B cell (primary cell): ENCODE measurements at regions of chr14 and their contacts with region 1.

Region 1: GRCh38 chr14:21229821-21230220 is 39.4 kb downstream of the HNRNPC start:
- DNase-seq: no peak
- ATAC-seq: no peak
- H3K4me3 ChIP-seq: no peak overlapping the region
- H3K4me3 Mint-ChIP-seq: no peak overlapping the region
- H3K27ac ChIP-seq: no peak overlapping the region
- H3K27ac Mint-ChIP-seq: no peak overlapping the region
- H3K4me1 ChIP-seq: peaks cover 0 to 3% of the 10 kb centered on the region in 2 donors
- H3K4me1 Mint-ChIP-seq: peaks cover 25% of the 10 kb centered on the region
- H3K27me3 ChIP-seq: no peaks in the 10 kb centered on the region
- H3K27me3 Mint-ChIP-seq: no peaks in the 10 kb centered on the region
- CTCF ChIP-seq: no peak

Region 2: GRCh38 chr14:21263656-21264411 is 34.0 kb after region 1 on chr14:
- CTCF ChIA-PET with region 1: interaction called, 3 read pairs
- POLR2A ChIA-PET with region 1: no interaction called
- intact Hi-C with region 1: loop called (anchors 5 kb)
- DNase-seq: peak; percentile 21
- ATAC-seq: peak; percentile 47
- H3K4me3 ChIP-seq: no peak overlapping the region
- H3K4me3 Mint-ChIP-seq: peak overlapping the region; percentile 48
- H3K27ac ChIP-seq: peak overlapping the region in 1 of 2 donors; percentile 35
- H3K27ac Mint-ChIP-seq: peak overlapping the region; percentile 2
- H3K4me1 ChIP-seq: peaks cover 59 to 62% of the 10 kb centered on the region in 2 donors
- H3K4me1 Mint-ChIP-seq: peaks cover 73% of the 10 kb centered on the region
- H3K27me3 ChIP-seq: no peaks in the 10 kb centered on the region
- H3K27me3 Mint-ChIP-seq: no peaks in the 10 kb centered on the region
- CTCF ChIP-seq: no peak